ENCODE measurements at regions of chr7 and their contacts with region 1.

Region 1: DNA sequence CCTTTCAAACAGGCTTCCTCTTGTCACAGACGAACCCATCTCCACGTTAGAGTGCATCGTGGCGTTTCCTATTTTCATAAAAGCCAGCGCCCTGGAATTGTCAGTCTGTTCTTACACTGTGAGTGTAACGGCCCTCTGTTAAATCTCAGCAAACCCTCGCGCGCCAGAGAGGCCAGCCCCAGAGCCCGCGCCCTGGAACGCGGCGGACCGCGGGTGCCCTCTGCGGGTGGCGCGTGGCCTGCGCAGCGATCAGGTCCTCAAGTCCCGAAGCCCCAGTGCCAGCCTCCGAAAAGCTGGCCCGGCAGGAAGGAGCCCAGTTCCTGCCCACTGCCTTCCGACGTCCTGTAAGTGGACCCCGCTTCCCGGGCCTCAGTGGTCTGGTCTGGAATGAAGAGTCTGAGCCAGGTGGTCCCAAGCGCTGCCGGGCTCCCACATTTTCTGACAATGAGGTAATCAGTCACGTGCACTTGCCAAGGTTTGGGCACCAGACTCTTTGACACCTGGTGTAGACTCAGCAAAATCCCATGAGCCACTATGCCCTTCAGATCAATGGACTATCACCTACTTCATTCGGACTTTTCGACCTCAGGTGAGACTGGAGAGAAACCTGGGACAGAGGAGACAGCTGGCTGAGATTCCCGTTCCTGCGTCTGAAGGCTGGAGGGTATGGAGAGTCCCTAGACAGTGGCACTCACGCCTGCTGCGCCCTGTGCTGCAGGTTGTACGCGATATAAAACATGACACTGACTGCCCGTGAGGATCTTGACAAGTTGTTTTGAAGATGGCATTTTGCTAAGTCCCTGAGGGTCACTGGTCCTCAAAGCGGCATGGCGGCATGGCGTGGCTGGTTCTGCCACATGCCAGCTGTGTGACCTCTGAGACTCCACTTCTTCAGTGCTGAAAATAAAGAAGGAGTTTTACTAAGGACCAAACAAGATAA is 109.4 kb upstream of the LANCL2 start:
- DNase-seq: no peak
- H3K4me3 ChIP-seq: peak overlapping the region; percentile 68
- CTCF ChIP-seq: peak; percentile 96

Region 2: DNA sequence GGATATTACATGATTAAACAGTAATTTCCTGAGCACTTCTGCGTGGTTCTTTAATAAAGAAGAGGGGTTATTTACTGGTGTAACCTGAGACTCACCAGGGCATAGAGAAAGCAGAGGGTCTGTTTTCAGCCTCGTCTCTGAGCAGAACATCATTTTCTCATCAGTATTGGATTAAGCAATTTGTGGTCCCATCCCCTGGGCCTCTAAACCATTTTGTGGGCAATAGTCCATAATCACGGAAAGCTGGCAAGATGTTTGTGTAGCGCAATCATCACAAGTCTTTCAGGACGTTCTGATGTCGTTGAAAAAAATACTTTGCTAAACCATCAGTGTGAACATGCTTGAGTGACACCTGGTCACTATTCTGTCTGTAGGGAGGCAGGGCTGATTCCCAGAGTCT is 459.6 kb before region 1 on chr7:
- CTCF ChIA-PET with region 1: interaction called, 141 read pairs
- POLR2A ChIA-PET with region 1: no interaction called
- DNase-seq: no peak
- H3K4me3 ChIP-seq: no peak overlapping the region
- CTCF ChIP-seq: no peak

Region 3: DNA sequence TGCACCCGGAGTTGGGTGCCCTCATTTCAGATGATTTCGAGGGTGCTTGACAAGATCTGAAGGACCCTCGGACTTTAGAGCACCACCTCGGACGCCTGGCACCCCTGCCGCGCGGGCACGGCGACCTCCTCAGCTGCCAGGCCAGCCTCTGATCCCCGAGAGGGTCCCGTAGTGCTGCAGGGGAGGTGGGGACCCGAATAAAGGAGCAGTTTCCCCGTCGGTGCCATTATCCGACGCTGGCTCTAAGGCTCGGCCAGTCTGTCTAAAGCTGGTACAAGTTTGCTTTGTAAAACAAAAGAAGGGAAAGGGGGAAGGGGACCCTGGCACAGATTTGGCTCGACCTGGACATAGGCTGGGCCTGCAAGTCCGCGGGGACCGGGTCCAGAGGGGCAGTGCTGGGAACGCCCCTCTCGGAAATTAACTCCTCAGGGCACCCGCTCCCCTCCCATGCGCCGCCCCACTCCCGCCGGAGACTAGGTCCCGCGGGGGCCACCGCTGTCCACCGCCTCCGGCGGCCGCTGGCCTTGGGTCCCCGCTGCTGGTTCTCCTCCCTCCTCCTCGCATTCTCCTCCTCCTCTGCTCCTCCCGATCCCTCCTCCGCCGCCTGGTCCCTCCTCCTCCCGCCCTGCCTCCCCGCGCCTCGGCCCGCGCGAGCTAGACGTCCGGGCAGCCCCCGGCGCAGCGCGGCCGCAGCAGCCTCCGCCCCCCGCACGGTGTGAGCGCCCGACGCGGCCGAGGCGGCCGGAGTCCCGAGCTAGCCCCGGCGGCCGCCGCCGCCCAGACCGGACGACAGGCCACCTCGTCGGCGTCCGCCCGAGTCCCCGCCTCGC is 237.2 kb before region 1 on chr7 and contains the start of gene EGFR:
- CTCF ChIA-PET with region 1: interaction called, 68 read pairs
- POLR2A ChIA-PET with region 1: interaction called, 3 read pairs
- DNase-seq: no peak
- H3K4me3 ChIP-seq: peak within 1 kb of the TSS; percentile 75
- CTCF ChIP-seq: no peak

Region 4: DNA sequence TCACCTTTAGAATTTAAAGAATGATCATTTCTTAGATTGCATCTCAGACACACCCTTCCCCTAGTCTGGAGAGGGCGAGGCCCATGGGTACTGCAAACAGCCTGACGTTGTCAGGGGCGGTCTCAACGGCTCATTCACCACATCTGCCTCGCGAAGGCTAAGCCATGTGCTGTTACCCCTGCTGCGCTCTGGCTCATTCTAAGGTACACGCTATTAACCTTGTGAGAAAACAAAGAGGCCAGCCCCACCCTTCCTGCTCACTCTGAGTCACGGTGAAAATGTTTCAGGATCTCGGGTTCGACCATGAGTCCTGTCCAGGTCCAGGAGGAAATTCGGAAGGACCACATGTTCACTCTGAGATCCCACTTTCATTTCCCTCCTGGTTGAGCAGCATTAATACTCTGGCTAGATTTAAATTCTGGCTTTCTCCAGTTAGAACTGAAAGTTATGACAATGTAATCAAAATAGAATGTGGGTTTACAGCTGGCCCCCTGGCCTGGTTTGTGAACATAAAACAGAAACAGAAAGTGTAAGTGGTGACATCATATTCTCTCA is 181.7 kb before region 1 on chr7:
- CTCF ChIA-PET with region 1: interaction called, 24 read pairs
- POLR2A ChIA-PET with region 1: no interaction called
- DNase-seq: no peak
- H3K4me3 ChIP-seq: peak overlapping the region; percentile 35
- CTCF ChIP-seq: no peak

Region 5: DNA sequence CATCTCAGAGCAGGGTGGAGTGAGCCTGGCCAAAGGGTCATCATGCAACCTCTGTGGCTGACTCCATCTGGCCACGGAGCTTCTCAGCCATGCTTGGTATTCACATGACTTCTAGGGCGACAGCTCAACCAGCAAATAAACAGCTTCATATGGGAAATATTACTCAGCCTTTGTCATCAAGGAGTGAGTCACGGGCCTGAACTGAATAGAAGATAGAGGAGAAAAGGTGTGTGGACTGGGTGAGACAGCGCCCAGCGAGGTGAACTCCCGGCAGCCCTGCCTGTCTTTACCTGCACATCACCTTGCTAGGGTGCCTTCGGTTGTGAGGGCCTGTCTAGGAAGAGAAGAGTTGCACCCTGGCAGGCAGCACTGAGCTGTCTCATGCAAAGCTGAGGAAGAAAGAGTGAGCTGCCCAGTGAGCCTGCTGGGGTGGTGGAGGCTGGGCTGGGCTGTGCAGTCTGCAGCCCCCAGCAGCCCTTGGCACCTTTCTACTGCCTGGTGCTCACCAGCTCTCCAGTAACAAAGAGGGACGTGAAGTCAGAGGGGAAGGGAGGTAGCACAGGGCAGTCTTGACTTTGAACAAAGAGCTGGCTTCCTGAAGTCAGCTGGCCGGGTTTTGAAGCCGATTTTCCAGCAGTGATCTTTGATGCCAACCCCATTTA is 122.7 kb before region 1 on chr7:
- CTCF ChIA-PET with region 1: interaction called, 23 read pairs
- POLR2A ChIA-PET with region 1: interaction called, 11 read pairs
- DNase-seq: peak; percentile 89
- H3K4me3 ChIP-seq: no peak overlapping the region
- CTCF ChIP-seq: no peak

Region 6: DNA sequence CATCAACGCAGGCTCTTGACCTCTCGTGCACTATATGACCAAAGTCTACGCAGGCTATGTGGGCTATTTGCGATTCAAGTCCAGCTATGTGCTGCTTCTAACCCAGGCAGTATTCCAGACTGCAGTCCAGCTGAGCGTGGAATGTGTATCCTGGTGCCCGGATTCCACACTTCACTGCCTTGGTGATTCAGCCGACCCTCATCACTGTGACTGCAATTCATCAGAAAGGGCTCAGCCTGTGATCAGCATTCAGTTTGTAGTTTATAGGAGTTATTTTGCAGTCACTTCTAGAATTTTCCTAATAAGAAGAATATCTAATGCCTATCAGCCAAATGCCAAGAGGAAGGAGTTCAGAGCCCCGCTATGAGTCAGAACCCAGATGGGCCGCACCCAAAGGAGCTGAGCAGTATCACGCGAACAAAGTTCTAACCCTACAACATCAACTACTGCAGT is 10.5 kb before region 1 on chr7:
- CTCF ChIA-PET with region 1: interaction called, 56 read pairs
- POLR2A ChIA-PET with region 1: no interaction called
- DNase-seq: peak; percentile 46
- H3K4me3 ChIP-seq: no peak overlapping the region
- CTCF ChIP-seq: no peak

Region 7: DNA sequence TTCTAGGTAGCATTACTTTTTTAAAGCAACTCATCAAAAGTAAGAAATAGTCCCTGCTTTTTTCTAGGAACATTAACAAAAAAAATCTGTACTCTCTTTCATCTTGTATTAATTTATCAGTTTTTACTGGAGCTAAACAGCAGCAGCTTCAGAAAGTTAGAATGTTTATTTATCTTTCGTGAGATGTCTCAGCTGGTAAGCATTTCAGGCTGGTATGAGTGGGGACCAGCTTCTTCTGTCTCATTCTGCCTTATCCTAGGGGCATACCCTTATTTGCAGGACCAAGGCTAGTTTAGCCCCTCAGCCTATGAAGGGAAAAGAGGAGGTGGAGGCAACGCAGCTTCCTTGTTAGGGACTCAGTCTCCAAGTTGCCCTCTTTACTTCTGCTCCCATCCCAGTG is 144.4 kb after region 1 on chr7:
- CTCF ChIA-PET with region 1: no interaction called
- POLR2A ChIA-PET with region 1: no interaction called
- DNase-seq: no peak
- H3K4me3 ChIP-seq: no peak overlapping the region
- CTCF ChIP-seq: no peak

Region 8: DNA sequence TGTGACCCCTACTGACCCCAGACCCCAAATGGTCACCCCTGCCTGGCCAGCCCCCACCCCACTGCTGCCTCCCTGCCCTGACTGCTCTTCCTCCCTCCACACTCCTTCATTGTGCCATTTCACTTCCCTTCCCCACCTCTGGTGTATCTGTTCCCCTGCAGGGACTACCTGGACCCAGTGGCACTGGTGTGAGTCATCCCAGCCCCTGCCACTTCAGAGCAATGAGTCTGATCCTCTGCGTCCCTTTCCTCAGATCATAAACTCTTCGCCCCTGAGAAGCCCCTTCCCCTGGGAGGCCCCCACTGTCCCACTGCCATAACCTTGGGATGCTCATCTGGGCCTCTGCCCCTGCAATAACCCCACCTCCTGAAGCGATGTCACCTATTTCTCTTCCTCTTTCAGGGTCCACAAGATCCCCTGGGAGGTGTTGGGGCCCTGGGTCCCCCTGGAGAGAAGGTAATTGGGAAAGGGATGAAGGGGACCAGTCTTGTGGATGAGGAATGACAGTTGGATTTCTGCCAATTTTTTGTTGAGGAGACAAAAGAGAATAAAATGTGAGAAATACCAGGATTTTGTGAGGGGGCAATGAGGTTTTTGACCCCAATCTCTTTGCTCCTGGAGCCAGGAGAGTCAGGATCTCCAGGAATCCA is 335.6 kb after region 1 on chr7:
- CTCF ChIA-PET with region 1: no interaction called
- POLR2A ChIA-PET with region 1: no interaction called
- DNase-seq: no peak
- H3K4me3 ChIP-seq: no peak overlapping the region
- CTCF ChIP-seq: no peak

Region 9: GRCh38 chr7:55622241-55622640 is 366.5 kb after region 1 on chr7:
- CTCF ChIA-PET with region 1: no interaction called
- POLR2A ChIA-PET with region 1: no interaction called
- DNase-seq: no peak
- H3K4me3 ChIP-seq: no peak overlapping the region
- CTCF ChIP-seq: no peak

Measured in AG04449 (cell line).